Heart right ventricle (tissue), 16 donors: ENCODE measurements at regions of chr15 and their contacts with region 1.

Region 1: GRCh38 chr15:81768773-81769172 is 277.0 kb downstream of the MEX3B start:
- DNase-seq: no peak
- ATAC-seq: no peak
- H3K4me3 ChIP-seq: no peak overlapping the region
- H3K27ac ChIP-seq: no peak overlapping the region
- H3K4me1 ChIP-seq: no peaks in the 10 kb centered on the region
- H3K27me3 ChIP-seq: peaks cover 0 to 9% (median 0%) of the 10 kb centered on the region in 7 donors
- CTCF ChIP-seq: no peak

Region 2: DNA sequence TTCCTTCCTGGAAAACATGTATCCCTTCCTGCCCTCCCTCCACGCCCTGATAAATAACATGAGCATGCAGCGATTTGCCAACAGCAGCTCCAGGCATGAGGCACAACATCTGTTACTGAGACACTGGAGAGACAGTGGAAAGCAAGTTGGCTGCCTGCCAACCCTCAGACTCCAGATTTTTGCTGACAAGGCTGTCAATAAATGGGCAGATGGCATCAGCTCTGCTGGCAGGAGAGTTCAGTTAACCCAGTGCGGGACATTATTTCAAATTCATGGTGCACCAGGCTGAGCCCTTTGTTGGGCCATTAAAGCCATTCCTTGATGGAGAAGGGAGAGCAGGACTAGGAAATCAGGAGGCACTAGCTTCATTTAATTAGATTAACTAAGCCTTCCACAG is 16.2 kb before region 1 on chr15:
- intact Hi-C with region 1: loop called in 1 of 10 experiments (anchors 1 kb)
- DNase-seq: peak; percentile 34 to 36
- ATAC-seq: peak; percentile 52 to 83 (median 77)
- H3K4me3 ChIP-seq: no peak overlapping the region
- H3K27ac ChIP-seq: no peak overlapping the region
- H3K4me1 ChIP-seq: peaks cover 0 to 42% (median 21%) of the 10 kb centered on the region in 9 donors
- H3K27me3 ChIP-seq: no peaks in the 10 kb centered on the region
- CTCF ChIP-seq: no peak

Region 3: DNA sequence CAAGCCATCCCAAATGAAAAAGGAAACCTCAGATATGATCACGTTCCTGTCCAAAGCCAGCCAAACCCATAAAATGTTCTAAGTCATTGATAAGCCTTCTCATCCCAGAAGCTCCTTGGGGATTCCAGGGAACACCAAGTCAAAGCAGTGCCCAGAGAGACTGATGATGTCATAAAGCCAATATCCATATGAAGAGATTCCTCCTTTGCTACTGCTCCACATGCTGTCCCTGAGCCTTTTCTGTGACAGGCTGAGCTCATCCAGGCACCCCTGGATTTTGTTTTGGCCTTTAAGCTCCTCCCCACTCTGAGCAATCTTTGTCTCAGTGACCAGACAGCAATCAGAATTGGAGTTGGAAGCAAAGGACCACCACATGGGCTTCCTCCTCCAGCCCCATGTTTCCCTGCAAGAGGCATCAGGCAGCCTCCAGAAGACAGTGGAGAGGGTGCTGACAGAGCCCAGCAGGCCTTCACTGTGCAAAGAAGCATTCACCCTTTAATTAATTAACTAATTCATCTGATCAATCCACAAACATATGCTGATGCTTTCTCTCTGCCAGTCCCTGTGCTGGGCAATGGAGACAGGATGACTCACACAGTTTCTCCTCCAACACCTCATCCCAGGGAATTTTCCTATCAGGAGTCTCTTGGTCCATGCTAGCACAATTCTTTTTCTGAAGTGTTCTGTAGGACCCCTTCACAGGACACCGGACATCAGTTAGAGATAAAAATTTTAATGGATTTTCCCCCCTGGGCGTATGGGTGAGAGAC is 252.0 kb after region 1 on chr15:
- intact Hi-C with region 1: no loop called
- DNase-seq: no peak
- ATAC-seq: no peak
- H3K4me3 ChIP-seq: no peak overlapping the region
- H3K27ac ChIP-seq: no peak overlapping the region
- H3K4me1 ChIP-seq: peaks cover 0 to 7% (median 0%) of the 10 kb centered on the region in 9 donors
- H3K27me3 ChIP-seq: peaks cover 0 to 6% (median 0%) of the 10 kb centered on the region in 7 donors
- CTCF ChIP-seq: no peak